Endothelial cell of umbilical vein (primary cell): ENCODE measurements at regions of chr15 and their contacts with region 1.

Region 1: DNA sequence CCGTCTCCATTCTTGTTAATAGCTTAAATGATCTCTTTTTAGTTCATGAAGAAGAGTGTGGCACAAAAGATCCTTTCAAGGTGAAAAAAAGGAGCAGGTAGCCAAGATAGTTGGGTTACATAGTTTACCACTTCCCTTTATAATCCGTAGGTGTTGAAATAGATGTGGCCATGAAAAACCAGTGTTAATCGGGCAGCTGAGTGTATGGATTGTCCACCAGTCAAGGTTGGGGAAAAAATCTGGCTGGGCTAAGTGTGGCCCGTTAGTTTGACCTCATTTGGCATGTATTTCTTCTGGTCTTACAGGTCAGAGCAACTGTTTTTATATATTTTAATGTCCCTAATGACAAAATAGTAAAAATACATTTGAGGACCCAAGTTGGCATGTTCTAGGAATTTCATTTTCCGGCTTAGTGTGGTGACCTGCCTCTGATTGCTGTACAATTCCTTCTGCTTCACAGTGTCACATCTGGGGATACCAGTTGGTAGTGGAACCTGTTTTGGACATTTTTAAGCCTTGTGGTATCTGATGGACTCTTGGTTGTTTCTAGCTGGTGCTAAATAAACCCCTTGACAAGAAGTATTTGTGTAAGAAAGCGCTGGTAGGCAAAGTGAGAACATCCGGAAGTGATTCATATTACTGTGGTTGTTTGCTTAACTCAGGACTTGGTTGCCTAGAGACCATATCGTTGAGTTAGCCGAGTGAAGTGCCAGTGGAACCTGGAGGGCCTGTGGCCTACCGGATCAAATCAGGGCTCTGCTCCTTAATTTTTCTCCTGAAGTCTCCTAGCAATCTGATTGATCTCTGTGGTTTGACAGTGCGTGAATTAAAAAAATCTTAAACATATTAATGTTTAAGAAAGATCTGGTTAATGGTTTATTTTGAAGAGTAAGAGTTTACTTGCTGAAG is 12.6 kb downstream of the IQGAP1 start:
- DNase-seq: peak; percentile 96
- H3K4me3 ChIP-seq: peak overlapping the region in 1 of 3 experiments; percentile 54
- H3K27ac ChIP-seq: peak overlapping the region; percentile 100
- H3K4me1 ChIP-seq: peaks cover 54% of the 10 kb centered on the region
- H3K27me3 ChIP-seq: no peaks in the 10 kb centered on the region
- CTCF ChIP-seq: no peak
- POLR2A ChIP-seq: no peak

Region 2: GRCh38 chr15:90376789-90377188 is 23.9 kb before region 1 on chr15:
- CTCF ChIA-PET with region 1: no interaction called
- POLR2A ChIA-PET with region 1: no interaction called
- dilution Hi-C with region 1: no loop called
- intact Hi-C with region 1: loop called (anchors 1 kb)
- DNase-seq: peak; percentile 72
- H3K4me3 ChIP-seq: no peak overlapping the region
- H3K27ac ChIP-seq: peak overlapping the region; percentile 56
- H3K4me1 ChIP-seq: peaks cover 18% of the 10 kb centered on the region
- H3K27me3 ChIP-seq: no peaks in the 10 kb centered on the region
- CTCF ChIP-seq: no peak
- POLR2A ChIP-seq: no peak

Region 3: DNA sequence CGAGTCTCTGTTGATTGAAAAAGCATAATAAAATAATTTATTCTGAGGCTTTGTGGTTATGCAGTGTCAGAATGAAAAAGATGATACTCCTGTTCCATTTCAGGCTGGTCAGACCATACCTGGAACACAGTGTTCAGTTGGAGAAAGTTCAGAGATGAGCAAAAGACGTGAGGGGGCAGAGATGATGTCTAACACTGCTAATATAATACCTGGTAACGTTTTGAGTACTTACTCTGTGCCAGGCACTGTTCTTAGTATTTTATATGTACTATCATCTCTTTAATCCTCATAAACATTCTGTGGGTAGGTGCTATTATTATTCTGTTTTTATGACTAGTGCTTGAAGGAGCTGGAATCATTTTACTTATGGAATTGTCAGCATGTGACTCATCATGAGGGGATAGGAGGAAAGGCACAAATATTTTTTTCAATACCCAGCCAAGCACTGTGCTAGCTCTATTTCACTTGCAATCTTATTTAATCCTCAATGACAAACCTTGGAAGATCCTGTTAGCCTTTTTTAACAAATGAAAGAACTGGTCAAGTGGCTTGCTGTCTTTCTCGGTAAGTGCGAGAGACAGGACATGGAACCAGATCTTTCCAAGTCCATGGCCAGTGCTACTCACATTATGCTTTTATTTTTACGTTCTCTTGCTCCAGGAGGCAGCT is 19.2 kb after region 1 on chr15:
- CTCF ChIA-PET with region 1: interaction called, 3 read pairs
- POLR2A ChIA-PET with region 1: interaction called, 3 read pairs
- dilution Hi-C with region 1: no loop called
- intact Hi-C with region 1: loop called (anchors 2 kb)
- DNase-seq: peak; percentile 80
- H3K4me3 ChIP-seq: no peak overlapping the region
- H3K27ac ChIP-seq: peak overlapping the region; percentile 80
- H3K4me1 ChIP-seq: peaks cover 38% of the 10 kb centered on the region
- H3K27me3 ChIP-seq: no peaks in the 10 kb centered on the region
- CTCF ChIP-seq: no peak
- POLR2A ChIP-seq: peak; percentile 28

Region 4: DNA sequence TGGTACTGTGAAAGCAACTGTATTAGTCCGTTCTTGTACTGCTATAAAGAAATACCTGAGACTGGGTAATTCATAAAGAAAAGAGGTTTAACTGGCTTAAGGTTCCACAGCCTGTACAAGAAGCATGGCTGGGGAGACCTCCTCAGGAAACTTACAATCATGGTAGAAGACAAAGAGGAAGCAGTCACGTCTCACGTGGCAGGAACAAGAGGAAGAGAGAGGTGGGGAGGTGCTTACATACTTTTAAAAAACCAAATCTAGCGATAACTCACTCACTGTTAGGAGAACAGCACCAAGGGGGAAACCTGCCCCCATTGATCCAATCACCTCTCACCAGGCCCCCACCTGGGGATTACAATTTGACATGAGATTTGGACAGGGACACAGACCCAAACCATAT is 36.3 kb after region 1 on chr15:
- CTCF ChIA-PET with region 1: interaction called, 5 read pairs
- POLR2A ChIA-PET with region 1: no interaction called
- dilution Hi-C with region 1: no loop called
- intact Hi-C with region 1: loop called (anchors 1 kb)
- DNase-seq: no peak
- H3K4me3 ChIP-seq: no peak overlapping the region
- H3K27ac ChIP-seq: no peak overlapping the region
- H3K4me1 ChIP-seq: peaks cover 50% of the 10 kb centered on the region
- H3K27me3 ChIP-seq: no peaks in the 10 kb centered on the region
- CTCF ChIP-seq: no peak
- POLR2A ChIP-seq: no peak

Region 5: DNA sequence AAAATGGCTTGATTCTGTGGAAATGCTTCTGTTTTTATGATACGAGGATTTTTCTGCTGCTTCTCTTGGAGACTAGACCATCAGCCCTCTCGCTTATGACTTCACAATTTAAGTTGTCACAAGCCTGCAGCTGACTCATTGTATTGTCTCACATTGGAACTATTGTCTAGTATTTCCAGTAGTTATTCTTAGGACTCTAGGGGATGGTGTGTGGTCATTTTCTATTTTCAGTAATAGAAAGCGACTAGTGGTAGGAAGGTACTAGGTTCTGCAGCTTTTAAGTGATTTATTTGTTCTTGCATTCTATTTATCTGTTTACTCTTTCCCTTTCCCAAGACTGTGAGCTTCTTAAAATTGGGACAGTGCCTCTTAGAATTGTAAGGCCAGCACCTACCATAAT is 62.7 kb after region 1 on chr15:
- CTCF ChIA-PET with region 1: interaction called, 3 read pairs
- POLR2A ChIA-PET with region 1: no interaction called
- dilution Hi-C with region 1: no loop called
- intact Hi-C with region 1: loop called (anchors 2 kb)
- DNase-seq: peak; percentile 93
- H3K4me3 ChIP-seq: no peak overlapping the region
- H3K27ac ChIP-seq: peak overlapping the region; percentile 70
- H3K4me1 ChIP-seq: peaks cover 58% of the 10 kb centered on the region
- H3K27me3 ChIP-seq: no peaks in the 10 kb centered on the region
- CTCF ChIP-seq: no peak
- POLR2A ChIP-seq: no peak

Region 6: GRCh38 chr15:90482124-90483011 is 81.7 kb after region 1 on chr15:
- CTCF ChIA-PET with region 1: interaction called, 10 read pairs
- POLR2A ChIA-PET with region 1: no interaction called
- dilution Hi-C with region 1: no loop called
- intact Hi-C with region 1: no loop called
- DNase-seq: peak; percentile 78
- H3K4me3 ChIP-seq: no peak overlapping the region
- H3K27ac ChIP-seq: no peak overlapping the region
- H3K4me1 ChIP-seq: peaks cover 11% of the 10 kb centered on the region
- H3K27me3 ChIP-seq: no peaks in the 10 kb centered on the region
- CTCF ChIP-seq: peak; percentile 47 to 67
- POLR2A ChIP-seq: no peak

Region 7: GRCh38 chr15:90648137-90649070 is 247.7 kb after region 1 on chr15:
- CTCF ChIA-PET with region 1: no interaction called
- POLR2A ChIA-PET with region 1: no interaction called
- dilution Hi-C with region 1: no loop called
- intact Hi-C with region 1: no loop called
- DNase-seq: peak; percentile 88
- H3K4me3 ChIP-seq: no peak overlapping the region
- H3K27ac ChIP-seq: peak overlapping the region; percentile 97
- H3K4me1 ChIP-seq: peaks cover 30% of the 10 kb centered on the region
- H3K27me3 ChIP-seq: no peaks in the 10 kb centered on the region
- CTCF ChIP-seq: peak; percentile 70 to 82
- POLR2A ChIP-seq: peak; percentile 50